ENCODE measurements at regions of chr10 and their contacts with region 1.

Region 1: GRCh38 chr10:47024399-47025252 is 113.4 kb downstream of the PTPN20 start:
- DNase-seq: peak; percentile 19 to 81 (median 67)
- ATAC-seq: peak; percentile 75
- H3K4me3 ChIP-seq: no peak overlapping the region
- H3K4me3 Mint-ChIP-seq: no peak overlapping the region
- H3K27ac ChIP-seq: no peak overlapping the region
- H3K27ac Mint-ChIP-seq: no peak overlapping the region
- H3K4me1 ChIP-seq: no peaks in the 10 kb centered on the region
- H3K4me1 Mint-ChIP-seq: peaks cover 4% of the 10 kb centered on the region
- H3K27me3 ChIP-seq: peaks cover 0 to 5% of the 10 kb centered on the region in 2 experiments
- H3K27me3 Mint-ChIP-seq: peaks cover 5% of the 10 kb centered on the region
- CTCF ChIP-seq: peak; percentile 90

Region 2: GRCh38 chr10:47013507-47014154 is 11.0 kb before region 1 on chr10:
- CTCF ChIA-PET with region 1: interaction called, 18 read pairs
- POLR2A ChIA-PET with region 1: no interaction called
- intact Hi-C with region 1: no loop called
- DNase-seq: no peak
- ATAC-seq: no peak
- H3K4me3 ChIP-seq: no peak overlapping the region
- H3K4me3 Mint-ChIP-seq: no peak overlapping the region
- H3K27ac ChIP-seq: no peak overlapping the region
- H3K27ac Mint-ChIP-seq: no peak overlapping the region
- H3K4me1 ChIP-seq: no peaks in the 10 kb centered on the region
- H3K4me1 Mint-ChIP-seq: no peaks in the 10 kb centered on the region
- H3K27me3 ChIP-seq: no peaks in the 10 kb centered on the region
- H3K27me3 Mint-ChIP-seq: no peaks in the 10 kb centered on the region
- CTCF ChIP-seq: no peak

Region 3: GRCh38 chr10:47269294-47269693 is 244.7 kb after region 1 on chr10:
- CTCF ChIA-PET with region 1: interaction called, 4 read pairs
- POLR2A ChIA-PET with region 1: no interaction called
- intact Hi-C with region 1: loop called in 1 of 2 experiments (anchors 1 kb)
- DNase-seq: peak in 2 of 9 experiments; percentile 8 to 32
- ATAC-seq: no peak
- H3K4me3 ChIP-seq: no peak overlapping the region
- H3K4me3 Mint-ChIP-seq: no peak overlapping the region
- H3K27ac ChIP-seq: no peak overlapping the region
- H3K27ac Mint-ChIP-seq: no peak overlapping the region
- H3K4me1 ChIP-seq: peaks cover 22% of the 10 kb centered on the region
- H3K4me1 Mint-ChIP-seq: peaks cover 42% of the 10 kb centered on the region
- H3K27me3 ChIP-seq: no peaks in the 10 kb centered on the region
- H3K27me3 Mint-ChIP-seq: no peaks in the 10 kb centered on the region
- CTCF ChIP-seq: no peak

Region 4: GRCh38 chr10:47340608-47341170 is 316.1 kb after region 1 on chr10:
- CTCF ChIA-PET with region 1: interaction called, 36 read pairs
- POLR2A ChIA-PET with region 1: interaction called, 3 read pairs
- intact Hi-C with region 1: loop called in 1 of 2 experiments (anchors 1 kb)
- DNase-seq: peak; percentile 52 to 82 (median 70)
- ATAC-seq: peak; percentile 77
- H3K4me3 ChIP-seq: no peak overlapping the region
- H3K4me3 Mint-ChIP-seq: no peak overlapping the region
- H3K27ac ChIP-seq: no peak overlapping the region
- H3K27ac Mint-ChIP-seq: no peak overlapping the region
- H3K4me1 ChIP-seq: no peaks in the 10 kb centered on the region
- H3K4me1 Mint-ChIP-seq: no peaks in the 10 kb centered on the region
- H3K27me3 ChIP-seq: no peaks in the 10 kb centered on the region
- H3K27me3 Mint-ChIP-seq: peaks cover 3% of the 10 kb centered on the region
- CTCF ChIP-seq: peak; percentile 97

Region 5: DNA sequence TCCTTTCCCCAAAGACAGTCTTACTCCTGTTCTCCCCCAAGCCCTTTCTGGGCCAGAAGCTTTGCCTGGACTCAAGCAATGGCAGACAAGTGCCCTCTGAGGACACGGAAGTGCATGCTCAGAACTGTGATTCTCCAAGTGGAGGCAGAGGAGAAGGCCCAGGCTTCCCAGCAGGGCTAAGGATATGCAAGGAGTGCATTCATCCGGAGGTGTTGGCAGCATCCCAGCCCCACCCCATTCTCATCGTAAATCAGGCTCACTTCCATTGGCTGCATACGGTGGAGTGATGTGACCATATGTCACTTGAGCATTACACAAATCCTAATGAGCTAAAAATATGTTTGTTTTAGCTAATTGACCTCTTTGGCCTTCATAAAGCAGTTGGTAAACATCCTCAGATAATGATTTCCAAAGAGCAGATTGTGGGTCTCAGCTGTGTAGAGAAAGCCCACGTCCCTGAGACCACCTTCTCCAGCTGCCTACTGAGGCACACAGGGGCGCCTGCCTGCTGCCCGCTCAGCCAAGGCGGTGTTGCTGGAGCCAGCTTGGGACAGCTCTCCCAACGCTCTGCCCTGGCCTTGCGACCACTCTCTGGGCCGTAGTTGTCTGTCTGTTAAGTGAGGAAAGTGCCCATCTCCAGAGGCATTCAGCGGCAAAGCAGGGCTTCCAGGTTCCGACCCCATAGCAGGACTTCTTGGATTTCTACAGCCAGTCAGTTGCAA is 322.1 kb after region 1 on chr10:
- CTCF ChIA-PET with region 1: interaction called, 36 read pairs
- POLR2A ChIA-PET with region 1: no interaction called
- intact Hi-C with region 1: loop called in 1 of 2 experiments (anchors 1 kb)
- DNase-seq: no peak
- ATAC-seq: no peak
- H3K4me3 ChIP-seq: no peak overlapping the region
- H3K4me3 Mint-ChIP-seq: no peak overlapping the region
- H3K27ac ChIP-seq: no peak overlapping the region
- H3K27ac Mint-ChIP-seq: no peak overlapping the region
- H3K4me1 ChIP-seq: no peaks in the 10 kb centered on the region
- H3K4me1 Mint-ChIP-seq: no peaks in the 10 kb centered on the region
- H3K27me3 ChIP-seq: no peaks in the 10 kb centered on the region
- H3K27me3 Mint-ChIP-seq: no peaks in the 10 kb centered on the region
- CTCF ChIP-seq: no peak